Dendritic cell treated with granulocyte-macrophage colony-stimulating factor and Interleukin-4, amounts not matched to agents 40 ng/mL and 50 ng/mL, for 4 days (primary cell): ENCODE measurements at regions of chr11 and their contacts with region 1.

Region 1: GRCh38 chr11:19553683-19554333 is 158.8 kb upstream of the NAV2 start:
- H3K4me3 Mint-ChIP-seq: no peak overlapping the region
- H3K27ac Mint-ChIP-seq: no peak overlapping the region
- H3K4me1 Mint-ChIP-seq: no peaks in the 10 kb centered on the region
- H3K27me3 Mint-ChIP-seq: peaks cover 8% of the 10 kb centered on the region

Region 2: GRCh38 chr11:18987454-18988231 is 566.2 kb before region 1 on chr11:
- intact Hi-C with region 1: no loop called
- H3K4me3 Mint-ChIP-seq: no peak overlapping the region
- H3K27ac Mint-ChIP-seq: no peak overlapping the region
- H3K4me1 Mint-ChIP-seq: no peaks in the 10 kb centered on the region
- H3K27me3 Mint-ChIP-seq: no peaks in the 10 kb centered on the region

Region 3: GRCh38 chr11:19071255-19071654 is 482.6 kb before region 1 on chr11:
- intact Hi-C with region 1: loop called (anchors 1 kb)
- H3K4me3 Mint-ChIP-seq: peak overlapping the region; percentile 43
- H3K27ac Mint-ChIP-seq: no peak overlapping the region
- H3K4me1 Mint-ChIP-seq: no peaks in the 10 kb centered on the region
- H3K27me3 Mint-ChIP-seq: peaks cover 11% of the 10 kb centered on the region

Region 4: DNA sequence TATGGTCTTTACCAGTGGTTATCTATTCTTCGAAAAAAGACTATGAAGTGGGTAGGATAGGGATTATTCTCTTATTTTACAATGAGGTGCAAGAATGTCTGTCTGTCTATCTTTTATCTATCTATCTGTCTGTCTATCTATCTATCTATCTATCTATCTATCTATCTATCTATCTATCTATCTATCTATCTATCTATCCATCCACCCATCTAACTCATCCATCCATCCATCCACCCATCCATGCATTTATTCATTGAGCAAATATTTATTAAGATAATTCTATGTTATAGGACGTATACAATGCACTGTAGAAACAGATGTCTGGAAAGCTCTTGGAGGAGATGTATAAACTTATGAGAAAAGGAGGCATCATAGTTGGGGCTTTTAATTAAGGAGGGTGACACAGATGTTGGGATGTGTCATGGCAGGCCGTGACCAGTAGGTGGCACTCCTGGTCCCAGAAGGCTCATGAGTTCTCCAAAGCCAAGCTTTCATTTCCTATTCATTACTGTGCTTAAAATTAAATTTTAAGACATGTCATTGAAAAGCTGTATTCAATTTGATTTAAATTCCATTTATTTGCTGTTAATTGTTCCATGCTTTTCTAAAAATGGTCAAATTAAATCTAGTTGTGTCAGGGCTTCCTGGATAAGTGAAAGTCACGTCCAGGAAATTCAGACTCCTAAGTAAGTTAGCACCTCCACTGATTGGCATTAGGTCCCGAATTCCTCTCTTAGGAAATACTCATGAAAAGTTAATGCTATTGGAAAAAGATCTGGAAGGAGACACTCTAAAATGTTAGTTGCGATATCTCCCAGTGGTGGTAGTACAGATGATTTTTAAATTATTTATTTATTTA is 294.1 kb before region 1 on chr11:
- intact Hi-C with region 1: loop called (anchors 2 kb)
- H3K4me3 Mint-ChIP-seq: no peak overlapping the region
- H3K27ac Mint-ChIP-seq: no peak overlapping the region
- H3K4me1 Mint-ChIP-seq: no peaks in the 10 kb centered on the region
- H3K27me3 Mint-ChIP-seq: peaks cover 1% of the 10 kb centered on the region

Region 5: DNA sequence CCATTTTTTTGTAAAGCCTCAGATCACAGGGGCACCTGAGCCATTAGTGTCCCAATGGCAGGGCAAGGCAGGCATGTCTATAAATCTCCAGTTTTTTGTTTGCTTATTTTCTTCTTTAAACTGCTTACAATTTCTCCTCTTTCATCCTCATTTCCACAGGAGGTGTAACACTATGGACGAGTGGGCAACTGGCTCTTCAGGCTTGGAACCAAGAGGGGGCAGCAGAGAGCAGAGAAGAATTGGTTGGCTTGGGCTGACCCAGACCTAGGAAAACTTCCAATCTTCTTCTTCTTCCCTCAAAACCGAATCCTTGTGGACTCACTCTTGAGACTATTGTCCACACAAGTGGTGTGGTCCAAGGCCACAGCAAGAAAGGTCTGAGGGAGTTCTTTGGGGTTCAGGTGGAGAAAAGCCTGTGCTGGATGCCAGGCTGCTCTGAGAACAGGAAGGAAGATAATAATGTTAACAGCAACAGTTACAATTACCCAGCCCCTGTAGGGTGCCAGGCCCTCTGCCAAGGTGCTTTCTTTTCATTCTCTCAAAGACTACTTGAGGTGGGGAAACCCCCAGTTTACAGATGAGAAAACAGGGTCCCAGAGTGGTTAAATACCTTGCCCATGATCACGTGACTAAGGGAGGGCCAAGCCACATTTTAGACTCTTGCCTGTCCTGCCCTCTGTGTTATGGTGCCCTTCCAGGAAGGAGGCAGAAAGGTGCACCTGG is 242.3 kb before region 1 on chr11:
- intact Hi-C with region 1: loop called (anchors 2 kb)
- H3K4me3 Mint-ChIP-seq: no peak overlapping the region
- H3K27ac Mint-ChIP-seq: no peak overlapping the region
- H3K4me1 Mint-ChIP-seq: no peaks in the 10 kb centered on the region
- H3K27me3 Mint-ChIP-seq: peaks cover 1% of the 10 kb centered on the region

Region 6: GRCh38 chr11:19474954-19475715 is 78.7 kb before region 1 on chr11:
- intact Hi-C with region 1: no loop called
- H3K4me3 Mint-ChIP-seq: no peak overlapping the region
- H3K27ac Mint-ChIP-seq: no peak overlapping the region
- H3K4me1 Mint-ChIP-seq: no peaks in the 10 kb centered on the region
- H3K27me3 Mint-ChIP-seq: peaks cover 8% of the 10 kb centered on the region

Region 7: GRCh38 chr11:19742588-19743292 is 188.9 kb after region 1 on chr11:
- intact Hi-C with region 1: loop called (anchors 1 kb)
- H3K4me3 Mint-ChIP-seq: no peak overlapping the region
- H3K27ac Mint-ChIP-seq: no peak overlapping the region
- H3K4me1 Mint-ChIP-seq: no peaks in the 10 kb centered on the region
- H3K27me3 Mint-ChIP-seq: peaks cover 5% of the 10 kb centered on the region

Region 8: DNA sequence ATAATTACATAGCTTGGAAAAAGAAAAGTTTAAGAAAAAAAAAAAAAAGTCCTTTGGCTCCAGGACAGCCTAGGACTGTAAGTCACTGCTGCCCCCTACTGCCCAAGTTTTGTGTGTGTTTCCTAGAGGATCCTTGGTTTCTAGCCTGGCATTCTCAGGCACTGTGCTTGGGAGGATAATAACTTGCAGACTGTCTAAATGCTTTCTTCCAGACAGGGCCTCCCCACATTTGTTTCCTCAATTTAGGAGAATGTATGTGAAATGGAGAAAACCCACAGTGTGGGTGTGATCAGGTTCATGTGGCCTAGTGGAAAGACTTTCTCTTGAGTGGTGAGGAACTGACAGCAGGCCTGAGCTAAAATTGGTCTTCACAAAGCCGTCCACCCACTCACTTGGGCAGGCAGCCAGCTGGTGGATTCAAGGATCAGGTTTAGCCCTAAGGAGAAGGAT is 349.8 kb after region 1 on chr11:
- intact Hi-C with region 1: loop called (anchors 2 kb)
- H3K4me3 Mint-ChIP-seq: no peak overlapping the region
- H3K27ac Mint-ChIP-seq: no peak overlapping the region
- H3K4me1 Mint-ChIP-seq: no peaks in the 10 kb centered on the region
- H3K27me3 Mint-ChIP-seq: peaks cover 2% of the 10 kb centered on the region